Common myeloid progenitor, CD34-positive (primary cell): ENCODE measurements at regions of chr14 and their contacts with region 1.

Region 1: DNA sequence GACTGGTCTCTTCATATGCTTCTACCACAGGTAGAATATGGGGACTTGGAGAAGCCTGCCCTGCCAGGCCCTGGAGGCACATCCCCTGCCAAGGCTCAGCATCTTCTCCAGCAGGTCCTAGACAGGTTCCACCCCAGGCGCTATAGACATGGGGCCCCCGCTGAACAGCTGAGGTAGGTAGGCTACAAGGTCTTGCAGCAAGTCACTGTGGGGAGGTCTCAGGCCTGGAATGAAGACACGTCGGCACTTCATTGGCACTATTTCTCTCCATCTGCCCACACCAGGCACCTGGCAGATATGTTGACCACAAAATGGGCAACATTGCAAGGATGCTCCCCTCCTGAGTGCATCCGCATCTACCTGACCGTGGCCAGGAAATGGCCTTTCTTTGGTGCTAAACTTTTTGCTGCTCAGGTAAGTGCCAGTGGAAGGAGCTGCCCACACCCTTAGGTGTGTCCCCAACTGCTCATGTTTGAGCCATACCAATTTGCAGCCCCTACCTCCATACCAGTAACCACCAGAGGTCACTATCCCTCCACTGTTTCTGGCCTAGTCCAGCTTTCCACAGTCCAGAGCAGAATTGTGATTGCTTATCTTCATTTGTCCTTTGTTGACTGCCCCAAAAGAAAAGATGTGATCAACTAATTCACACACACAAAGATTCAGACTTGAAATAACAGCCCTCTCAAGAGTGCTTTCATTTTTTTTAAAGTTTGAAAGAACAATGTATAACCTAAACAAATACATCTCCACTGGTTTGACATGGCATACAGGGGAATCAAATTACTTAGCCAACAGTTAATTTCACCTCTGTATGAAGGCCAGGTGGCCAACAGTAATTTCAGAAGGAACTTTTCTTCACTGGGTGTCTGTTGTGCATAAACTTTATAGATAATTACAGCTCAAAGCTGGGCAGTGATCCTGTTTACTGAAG is 16.1 kb downstream of the PIGH start:
- DNase-seq: peak; percentile 51 to 72 (median 63)
- H3K4me3 ChIP-seq: no peak overlapping the region
- H3K27ac ChIP-seq: no peak overlapping the region
- H3K4me1 ChIP-seq: no peaks in the 10 kb centered on the region
- H3K27me3 ChIP-seq: peaks cover 0 to 6% (median 0%) of the 10 kb centered on the region in 5 experiments

Region 2: GRCh38 chr14:67599698-67600561 is 16.0 kb after region 1 on chr14 and contains the start of gene PIGH:
- CTCF ChIA-PET with region 1: interaction called, 11 read pairs
- POLR2A ChIA-PET with region 1: no interaction called
- DNase-seq: peak; percentile 90 to 94 (median 94)
- H3K4me3 ChIP-seq: peak within 1 kb of the TSS; percentile 41 to 97 (median 89)
- H3K27ac ChIP-seq: peak within 1 kb of the TSS; percentile 33 to 84
- H3K4me1 ChIP-seq: peaks cover 6 to 13% (median 10%) of the 10 kb centered on the region in 4 experiments
- H3K27me3 ChIP-seq: no peaks in the 10 kb centered on the region

Region 3: GRCh38 chr14:67674481-67675169 is 90.6 kb after region 1 on chr14 and contains the start of gene VTI1B:
- CTCF ChIA-PET with region 1: interaction called, 192 read pairs
- POLR2A ChIA-PET with region 1: no interaction called
- DNase-seq: peak; percentile 80 to 90 (median 83)
- H3K4me3 ChIP-seq: peak within 1 kb of the TSS; percentile 86 to 99 (median 91)
- H3K27ac ChIP-seq: peak within 1 kb of the TSS; percentile 96 to 99
- H3K4me1 ChIP-seq: peaks cover 7 to 24% (median 19%) of the 10 kb centered on the region in 4 experiments
- H3K27me3 ChIP-seq: no peaks in the 10 kb centered on the region

Region 4: GRCh38 chr14:67773844-67774377 is 189.9 kb after region 1 on chr14:
- CTCF ChIA-PET with region 1: no interaction called
- POLR2A ChIA-PET with region 1: no interaction called
- DNase-seq: no peak
- H3K4me3 ChIP-seq: no peak overlapping the region
- H3K27ac ChIP-seq: no peak overlapping the region
- H3K4me1 ChIP-seq: no peaks in the 10 kb centered on the region
- H3K27me3 ChIP-seq: no peaks in the 10 kb centered on the region